ENCODE measurements at regions of chr7 and their contacts with region 1.

Region 1: GRCh38 chr7:2863461-2864066 is 19.5 kb upstream of the GNA12 start:
- DNase-seq: peak; percentile 85 to 96
- H3K4me3 ChIP-seq: peak overlapping the region; percentile 58
- H3K27ac ChIP-seq: peak overlapping the region; percentile 97
- H3K4me1 ChIP-seq: peaks cover 28% of the 10 kb centered on the region
- H3K27me3 ChIP-seq: no peaks in the 10 kb centered on the region
- CTCF ChIP-seq: no peak

Region 2: GRCh38 chr7:2732959-2733584 is 130.5 kb before region 1 on chr7:
- CTCF ChIA-PET with region 1: no interaction called
- POLR2A ChIA-PET with region 1: no interaction called
- intact Hi-C with region 1: loop called (anchors 5 kb)
- DNase-seq: peak; percentile 83 to 93
- H3K4me3 ChIP-seq: no peak overlapping the region
- H3K27ac ChIP-seq: peak overlapping the region; percentile 38
- H3K4me1 ChIP-seq: peaks cover 19% of the 10 kb centered on the region
- H3K27me3 ChIP-seq: no peaks in the 10 kb centered on the region
- CTCF ChIP-seq: no peak

Region 3: DNA sequence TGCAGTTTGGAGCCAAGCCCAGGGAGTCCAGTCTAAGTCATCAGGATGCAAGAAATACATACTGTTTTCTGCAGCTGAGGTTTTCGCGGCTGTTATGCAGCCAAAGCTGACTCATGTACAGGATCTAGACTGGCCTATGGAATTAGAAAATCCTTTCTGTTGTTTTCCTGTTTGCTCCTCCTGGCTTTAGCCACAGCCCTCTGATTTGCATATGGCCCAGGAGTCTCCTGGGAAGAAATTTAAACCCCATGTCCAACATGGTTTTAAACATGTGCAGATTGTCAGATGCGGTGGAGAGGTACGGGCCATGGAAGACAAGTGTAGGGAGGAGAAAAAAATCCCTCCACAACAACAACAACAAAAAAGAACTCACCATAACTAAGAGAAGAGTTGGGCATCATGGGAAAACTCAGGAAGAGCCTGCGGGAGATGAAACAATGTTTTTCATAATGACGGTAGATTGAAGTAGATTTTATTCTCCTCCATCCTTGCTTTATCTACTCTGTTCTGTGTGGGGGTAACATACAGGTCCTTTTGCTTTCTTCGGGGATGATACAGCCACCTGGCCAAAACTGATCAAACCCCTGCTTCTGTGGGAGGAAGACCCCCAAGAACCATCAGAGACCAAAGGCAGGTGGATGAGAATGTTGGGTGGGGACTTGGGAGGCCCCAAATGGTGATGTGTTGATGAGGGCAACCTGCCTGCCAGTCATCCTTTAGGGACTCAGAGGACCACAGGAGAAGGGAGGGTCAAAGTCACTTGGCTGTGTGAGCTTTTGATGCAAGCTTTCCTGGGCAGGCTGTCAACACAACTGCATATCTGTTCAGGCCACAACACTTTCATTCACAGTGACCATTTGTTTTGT is 10.4 kb after region 1 on chr7:
- CTCF ChIA-PET with region 1: no interaction called
- POLR2A ChIA-PET with region 1: no interaction called
- intact Hi-C with region 1: no loop called
- DNase-seq: peak; percentile 76 to 95
- H3K4me3 ChIP-seq: no peak overlapping the region
- H3K27ac ChIP-seq: peak overlapping the region; percentile 97
- H3K4me1 ChIP-seq: peaks cover 17% of the 10 kb centered on the region
- H3K27me3 ChIP-seq: no peaks in the 10 kb centered on the region
- CTCF ChIP-seq: no peak

Region 4: DNA sequence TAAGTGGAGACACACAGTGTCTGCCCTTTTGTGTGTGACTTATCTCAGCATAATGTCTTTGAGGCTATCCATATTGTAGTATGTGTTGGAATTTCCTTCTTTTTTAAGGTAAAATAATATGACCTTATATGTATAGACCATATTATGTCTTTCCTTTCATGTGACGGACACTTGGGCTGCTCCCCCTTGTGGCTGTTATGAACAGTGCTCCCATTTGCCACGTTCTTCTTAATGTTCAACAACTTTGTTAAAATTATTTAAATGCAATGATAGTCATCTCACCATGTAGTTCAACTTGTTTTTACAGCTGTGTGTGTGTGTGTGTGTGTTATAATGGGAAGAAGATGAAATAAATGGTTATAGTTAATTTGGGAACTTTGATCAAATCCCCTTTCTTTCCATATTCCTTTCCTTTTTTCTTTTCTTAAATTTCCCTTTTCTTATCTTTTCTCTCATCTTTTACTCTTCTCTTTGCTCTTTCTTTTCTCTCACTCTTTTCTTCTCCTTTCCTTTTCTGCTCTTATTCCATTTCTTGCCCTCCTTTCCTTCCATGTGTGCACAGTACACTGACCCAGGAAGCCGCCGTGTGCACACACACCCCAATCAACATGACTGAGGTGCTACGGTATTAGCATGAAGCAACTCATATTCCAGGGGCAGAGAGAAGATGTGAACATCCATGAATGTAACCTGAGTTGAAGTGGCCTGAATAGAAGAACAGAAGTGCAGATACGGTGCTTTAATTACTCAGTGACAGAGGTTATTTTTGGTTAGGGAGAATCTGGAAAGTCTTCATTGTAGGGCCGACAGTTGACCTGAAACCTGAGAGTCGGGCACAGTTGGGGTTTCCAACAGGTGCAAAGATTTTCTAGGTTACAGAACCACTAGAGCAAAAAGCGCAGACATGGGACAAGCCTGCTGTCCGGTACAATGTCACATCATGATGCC is 1034.1 kb after region 1 on chr7:
- CTCF ChIA-PET with region 1: no interaction called
- POLR2A ChIA-PET with region 1: no interaction called
- intact Hi-C with region 1: loop called (anchors 2 kb)
- DNase-seq: peak in 1 of 2 experiments; percentile 14
- H3K4me3 ChIP-seq: no peak overlapping the region
- H3K27ac ChIP-seq: no peak overlapping the region
- H3K4me1 ChIP-seq: no peaks in the 10 kb centered on the region
- H3K27me3 ChIP-seq: peaks cover 82% of the 10 kb centered on the region
- CTCF ChIP-seq: peak; percentile 93

Measured in PC-9 (cell line).